ENCODE measurements at regions of chr12 and their contacts with region 1.

Region 1: GRCh38 chr12:18868717-18869116 is 130.8 kb downstream of the CAPZA3 start:
- DNase-seq: no peak
- H3K4me3 Mint-ChIP-seq: no peak overlapping the region
- H3K27ac Mint-ChIP-seq: no peak overlapping the region
- H3K4me1 Mint-ChIP-seq: peaks cover 10% of the 10 kb centered on the region
- H3K27me3 Mint-ChIP-seq: no peaks in the 10 kb centered on the region
- CTCF ChIP-seq: no peak

Region 2: GRCh38 chr12:18882690-18883089 is 14.0 kb after region 1 on chr12:
- CTCF ChIA-PET with region 1: interaction called, 10 read pairs
- POLR2A ChIA-PET with region 1: no interaction called
- intact Hi-C with region 1: no loop called
- DNase-seq: no peak
- H3K4me3 Mint-ChIP-seq: no peak overlapping the region
- H3K27ac Mint-ChIP-seq: no peak overlapping the region
- H3K4me1 Mint-ChIP-seq: no peaks in the 10 kb centered on the region
- H3K27me3 Mint-ChIP-seq: no peaks in the 10 kb centered on the region
- CTCF ChIP-seq: no peak